ENCODE measurements at regions of chr6 and their contacts with region 1.

Region 1: GRCh38 chr6:89689732-89690131 is 51.2 kb upstream of the LYRM2 start:
- DNase-seq: peak; percentile 97
- H3K4me3 ChIP-seq: no peak overlapping the region
- H3K27ac ChIP-seq: peak overlapping the region; percentile 48
- H3K4me1 ChIP-seq: peaks cover 24% of the 10 kb centered on the region
- H3K27me3 ChIP-seq: no peaks in the 10 kb centered on the region
- CTCF ChIP-seq: no peak

Region 2: GRCh38 chr6:89494131-89494796 is 195.5 kb before region 1 on chr6:
- CTCF ChIA-PET with region 1: no interaction called
- POLR2A ChIA-PET with region 1: no interaction called
- intact Hi-C with region 1: no loop called
- DNase-seq: no peak
- H3K4me3 ChIP-seq: no peak overlapping the region
- H3K27ac ChIP-seq: no peak overlapping the region
- H3K4me1 ChIP-seq: no peaks in the 10 kb centered on the region
- H3K27me3 ChIP-seq: no peaks in the 10 kb centered on the region
- CTCF ChIP-seq: no peak

Region 3: GRCh38 chr6:89667872-89668556 is 21.7 kb before region 1 on chr6:
- CTCF ChIA-PET with region 1: no interaction called
- POLR2A ChIA-PET with region 1: no interaction called
- intact Hi-C with region 1: loop called (anchors 1 kb)
- DNase-seq: peak; percentile 93
- H3K4me3 ChIP-seq: no peak overlapping the region
- H3K27ac ChIP-seq: peak overlapping the region; percentile 64
- H3K4me1 ChIP-seq: peaks cover 30% of the 10 kb centered on the region
- H3K27me3 ChIP-seq: no peaks in the 10 kb centered on the region
- CTCF ChIP-seq: no peak

Region 4: DNA sequence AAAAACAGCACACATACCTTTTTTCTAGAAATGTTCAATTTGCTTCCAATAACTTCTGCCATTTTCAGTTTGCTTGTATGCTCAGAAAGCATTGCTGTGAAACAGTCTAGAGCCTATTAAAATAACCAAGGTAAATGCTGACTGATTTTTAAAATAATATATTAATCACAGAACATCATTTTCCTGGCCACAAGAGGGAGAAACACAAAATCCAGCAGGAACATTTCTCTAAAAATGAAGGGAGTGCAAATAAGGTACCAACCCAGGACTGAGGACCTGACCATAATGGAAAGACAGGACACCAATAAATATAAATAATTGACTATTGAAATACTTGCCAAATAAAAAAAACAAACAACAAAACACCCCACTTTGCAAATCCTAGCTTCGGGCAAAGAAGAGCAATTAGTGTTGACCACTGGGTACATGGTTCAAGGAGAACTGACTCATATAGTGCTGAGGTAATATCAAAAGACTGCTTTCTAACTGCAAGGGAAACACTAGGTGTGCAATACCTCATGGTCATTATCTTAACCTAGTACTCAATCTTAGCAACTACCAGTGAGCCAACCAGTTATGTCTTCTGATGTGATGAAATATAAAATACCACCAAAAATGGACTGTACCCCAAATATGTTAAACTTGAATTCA is 87.0 kb after region 1 on chr6:
- CTCF ChIA-PET with region 1: no interaction called
- POLR2A ChIA-PET with region 1: no interaction called
- intact Hi-C with region 1: no loop called
- DNase-seq: no peak
- H3K4me3 ChIP-seq: no peak overlapping the region
- H3K27ac ChIP-seq: no peak overlapping the region
- H3K4me1 ChIP-seq: no peaks in the 10 kb centered on the region
- H3K27me3 ChIP-seq: no peaks in the 10 kb centered on the region
- CTCF ChIP-seq: no peak